ENCODE measurements at regions of chr13 and their contacts with region 1.

Region 1: DNA sequence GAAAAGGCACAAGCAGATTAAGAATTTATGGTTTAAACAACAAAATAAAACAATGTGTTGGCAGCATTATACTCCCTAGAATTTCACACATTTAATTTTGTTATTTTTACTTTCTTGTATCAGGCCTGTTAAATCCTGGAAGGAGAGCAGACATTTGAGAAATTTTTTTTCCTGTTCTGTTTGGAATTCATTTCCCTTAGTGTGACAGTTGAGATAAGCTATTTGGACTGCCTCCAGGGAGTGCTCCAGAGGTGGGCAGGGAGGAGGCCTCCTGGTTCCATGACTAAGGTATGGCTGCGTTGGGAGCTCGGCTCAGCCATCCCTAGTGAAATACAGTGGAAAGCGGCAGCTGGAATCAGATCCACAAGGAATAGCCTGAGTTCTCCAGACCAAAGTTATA is 185.7 kb downstream of the KCNRG start:
- H3K4me3 ChIP-seq: no peak overlapping the region
- H3K27ac ChIP-seq: 0 out of 2 replicates have a peak overlapping the region, but pooled peaks have one; percentile 8
- H3K4me1 ChIP-seq: peaks cover 22% of the 10 kb centered on the region
- CTCF ChIP-seq: no peak

Region 2: GRCh38 chr13:49914947-49915346 is 286.0 kb before region 1 on chr13:
- CTCF ChIA-PET with region 1: no interaction called
- POLR2A ChIA-PET with region 1: no interaction called
- H3K4me3 ChIP-seq: no peak overlapping the region
- H3K27ac ChIP-seq: no peak overlapping the region
- H3K4me1 ChIP-seq: no peaks in the 10 kb centered on the region
- CTCF ChIP-seq: no peak

Region 3: GRCh38 chr13:50189450-50189849 is 11.5 kb before region 1 on chr13:
- CTCF ChIA-PET with region 1: interaction called, 14 read pairs
- POLR2A ChIA-PET with region 1: no interaction called
- H3K4me3 ChIP-seq: no peak overlapping the region
- H3K27ac ChIP-seq: no peak overlapping the region
- H3K4me1 ChIP-seq: peaks cover 8% of the 10 kb centered on the region
- CTCF ChIP-seq: no peak

Measured in HEK293 (cell line).